Transverse colon (tissue), 4 donors: ENCODE measurements at regions of chr2 and their contacts with region 1.

Region 1: GRCh38 chr2:43239981-43240761 is 13.8 kb upstream of the ZFP36L2 start:
- DNase-seq: no peak
- H3K4me3 ChIP-seq: no peak overlapping the region
- H3K27ac ChIP-seq: peak overlapping the region; percentile 19 to 65 (median 44)
- H3K4me1 ChIP-seq: peaks cover 0 to 3% (median 0%) of the 10 kb centered on the region in 4 donors
- H3K27me3 ChIP-seq: no peaks in the 10 kb centered on the region
- CTCF ChIP-seq: no peak
- EP300 ChIP-seq: no peak
- POLR2A ChIP-seq: no peak

Region 2: DNA sequence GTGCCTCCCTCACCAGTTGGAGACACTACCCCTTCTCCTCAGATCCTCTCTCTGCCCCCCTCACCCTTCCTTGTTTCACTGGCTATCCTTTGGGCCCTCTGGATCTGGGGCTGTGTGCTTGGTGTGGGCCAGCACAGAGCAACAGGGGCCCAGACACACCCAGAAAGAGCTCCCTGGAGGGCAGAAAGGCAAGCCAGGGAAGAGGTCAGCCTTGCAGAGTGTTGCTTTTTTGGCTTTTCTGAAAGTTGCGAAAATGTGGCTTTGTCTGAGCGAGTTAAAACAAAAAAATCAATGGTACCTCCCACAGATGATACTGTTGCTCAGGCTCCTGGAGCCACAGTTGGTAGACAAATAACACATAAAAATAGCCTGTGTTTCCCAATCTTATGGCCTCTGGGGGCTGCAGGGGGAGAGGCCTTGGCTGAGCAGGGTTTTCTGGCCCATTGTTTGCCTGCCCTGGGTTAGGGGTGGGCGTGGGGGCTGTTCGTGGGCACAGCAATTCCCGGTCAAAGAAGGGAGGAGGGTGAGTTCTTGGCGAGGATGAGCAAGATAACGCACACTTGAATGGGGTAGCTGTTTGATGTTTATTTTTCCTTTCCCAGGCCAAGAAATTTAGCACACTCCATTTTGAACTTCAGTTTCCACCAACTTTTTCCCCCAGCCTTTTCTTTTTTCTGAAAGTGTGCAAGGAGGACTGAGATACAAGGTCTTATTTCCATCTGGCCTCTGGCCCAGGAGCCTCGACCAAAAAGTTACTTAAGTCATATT is 280.8 kb before region 1 on chr2:
- in situ Hi-C with region 1: loop called in 2 of 4 experiments (anchors 10 kb)
- intact Hi-C with region 1: no loop called
- DNase-seq: no peak
- H3K4me3 ChIP-seq: no peak overlapping the region
- H3K27ac ChIP-seq: peak overlapping the region; percentile 66 to 76 (median 70)
- H3K4me1 ChIP-seq: peaks cover 13 to 46% (median 27%) of the 10 kb centered on the region in 4 donors
- H3K27me3 ChIP-seq: no peaks in the 10 kb centered on the region
- CTCF ChIP-seq: no peak
- EP300 ChIP-seq: no peak
- POLR2A ChIP-seq: no peak

Region 3: GRCh38 chr2:42964439-42965083 is 275.6 kb before region 1 on chr2:
- in situ Hi-C with region 1: loop called in 2 of 4 experiments (anchors 10 kb)
- intact Hi-C with region 1: no loop called
- DNase-seq: no peak
- H3K4me3 ChIP-seq: no peak overlapping the region
- H3K27ac ChIP-seq: peak overlapping the region; percentile 22 to 43 (median 31)
- H3K4me1 ChIP-seq: peaks cover 10 to 37% (median 20%) of the 10 kb centered on the region in 4 donors
- H3K27me3 ChIP-seq: no peaks in the 10 kb centered on the region
- CTCF ChIP-seq: no peak
- EP300 ChIP-seq: no peak
- POLR2A ChIP-seq: no peak

Region 4: DNA sequence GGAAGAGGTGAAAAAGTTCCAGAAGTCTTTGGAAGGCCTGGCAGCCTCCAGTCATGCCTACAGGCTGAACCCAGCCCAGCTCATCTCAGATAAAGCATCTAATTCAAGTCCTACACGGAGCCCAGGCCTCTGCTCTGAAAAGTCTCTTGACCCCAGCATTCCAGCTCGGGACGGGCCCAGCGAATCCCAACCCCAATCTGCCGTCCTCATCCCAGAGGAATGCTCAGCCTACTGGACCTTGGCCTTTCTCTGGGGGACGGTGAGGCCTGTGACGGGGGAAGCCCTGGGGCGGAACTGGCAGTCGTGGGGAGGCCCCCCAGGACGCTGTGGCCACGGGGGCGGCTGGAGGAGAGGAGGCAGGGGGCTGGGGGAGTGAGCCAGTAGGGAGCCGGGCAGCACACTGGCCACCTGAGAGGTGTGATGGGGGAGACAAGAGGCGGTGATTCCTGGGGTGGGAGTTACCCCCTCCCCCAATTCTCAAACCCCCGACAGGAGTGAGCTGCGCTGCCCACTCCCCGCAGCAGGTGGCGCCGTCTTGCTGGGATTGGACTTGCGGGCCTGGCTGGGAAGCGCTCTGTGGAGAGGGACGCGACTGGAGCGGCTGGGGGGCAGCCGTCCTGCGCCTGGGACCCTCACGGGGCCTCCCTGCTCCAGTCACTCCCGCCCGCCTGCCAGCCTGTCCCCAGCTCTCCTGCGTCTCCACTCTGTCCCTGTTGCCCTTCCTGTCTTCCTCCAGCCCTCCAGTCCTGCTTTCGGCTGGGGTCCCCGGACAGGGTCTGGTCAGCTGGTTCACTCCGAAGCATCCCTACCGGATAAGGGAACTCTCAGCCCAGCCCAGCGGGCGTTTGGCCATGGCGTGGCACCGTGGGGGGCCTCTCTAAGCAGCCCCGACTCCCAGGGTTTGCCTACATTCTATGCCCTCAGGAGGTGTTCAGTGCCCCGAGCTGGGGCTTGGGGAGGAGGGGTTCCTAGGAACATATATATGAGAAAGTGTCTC is 265.2 kb before region 1 on chr2:
- in situ Hi-C with region 1: loop called in 1 of 4 experiments (anchors 10 kb)
- intact Hi-C with region 1: no loop called
- DNase-seq: peak; percentile 79
- H3K4me3 ChIP-seq: peak overlapping the region in 3 of 4 donors; percentile 16 to 46 (median 31)
- H3K27ac ChIP-seq: peak overlapping the region; percentile 58 to 81 (median 70)
- H3K4me1 ChIP-seq: peaks cover 14 to 42% (median 32%) of the 10 kb centered on the region in 4 donors
- H3K27me3 ChIP-seq: no peaks in the 10 kb centered on the region
- CTCF ChIP-seq: peak; percentile 93 to 97 (median 95)
- EP300 ChIP-seq: no peak
- POLR2A ChIP-seq: no peak

Region 5: GRCh38 chr2:43127208-43127940 is 112.8 kb before region 1 on chr2:
- in situ Hi-C with region 1: loop called in 1 of 4 experiments (anchors 10 kb)
- intact Hi-C with region 1: no loop called
- DNase-seq: peak; percentile 84
- H3K4me3 ChIP-seq: no peak overlapping the region
- H3K27ac ChIP-seq: peak overlapping the region; percentile 83 to 89 (median 86)
- H3K4me1 ChIP-seq: peaks cover 20 to 60% (median 34%) of the 10 kb centered on the region in 4 donors
- H3K27me3 ChIP-seq: no peaks in the 10 kb centered on the region
- CTCF ChIP-seq: peak; percentile 52 to 78 (median 59)
- EP300 ChIP-seq: no peak
- POLR2A ChIP-seq: no peak

Region 6: DNA sequence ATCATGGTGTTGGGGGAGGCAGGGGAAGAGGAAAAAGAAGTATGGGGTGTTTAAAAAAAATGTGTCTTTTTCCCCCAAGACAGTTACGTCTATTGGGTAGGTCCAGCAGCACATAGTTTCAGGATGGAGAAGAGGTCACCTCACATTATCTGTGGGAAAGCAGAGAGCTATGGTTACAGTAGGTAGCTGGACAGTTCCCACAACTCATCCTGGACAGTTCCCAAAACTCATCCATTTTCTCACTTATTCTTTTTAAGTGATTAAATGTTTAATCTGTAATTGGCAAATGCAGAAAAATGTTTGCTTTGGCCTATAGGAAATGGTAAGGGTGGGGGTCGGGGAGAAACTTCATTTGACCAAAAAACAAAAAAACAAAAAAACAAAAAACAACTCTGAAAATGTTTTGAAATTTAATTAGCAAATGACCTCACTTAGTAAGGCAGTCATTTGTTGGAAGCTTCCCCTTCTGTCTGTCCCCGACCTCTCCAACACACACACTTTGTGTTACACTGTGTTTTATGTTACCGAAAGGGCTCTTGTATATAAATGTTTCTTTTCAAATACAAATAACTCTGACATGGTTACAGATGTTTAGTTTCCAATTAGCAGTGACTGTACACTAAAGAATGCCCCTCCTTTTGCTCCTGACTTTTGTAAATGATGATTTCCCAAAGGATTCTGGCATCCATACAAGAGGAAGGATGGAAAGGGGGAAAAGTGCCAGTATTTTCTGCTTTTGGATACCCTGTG is 159.5 kb after region 1 on chr2:
- in situ Hi-C with region 1: loop called in 1 of 4 experiments (anchors 10 kb)
- intact Hi-C with region 1: loop called (anchors 10 kb)
- DNase-seq: no peak
- H3K4me3 ChIP-seq: no peak overlapping the region
- H3K27ac ChIP-seq: peak overlapping the region; percentile 63 to 80 (median 72)
- H3K4me1 ChIP-seq: peaks cover 0 to 36% (median 0%) of the 10 kb centered on the region in 4 donors
- H3K27me3 ChIP-seq: no peaks in the 10 kb centered on the region
- CTCF ChIP-seq: no peak
- EP300 ChIP-seq: peak; percentile 77
- POLR2A ChIP-seq: no peak

Region 7: GRCh38 chr2:43408407-43409160 is 168.4 kb after region 1 on chr2:
- in situ Hi-C with region 1: loop called in 1 of 4 experiments (anchors 10 kb)
- intact Hi-C with region 1: no loop called
- DNase-seq: no peak
- H3K4me3 ChIP-seq: no peak overlapping the region
- H3K27ac ChIP-seq: peak overlapping the region; percentile 13 to 27 (median 19)
- H3K4me1 ChIP-seq: peaks cover 0 to 38% (median 7%) of the 10 kb centered on the region in 4 donors
- H3K27me3 ChIP-seq: no peaks in the 10 kb centered on the region
- CTCF ChIP-seq: no peak
- EP300 ChIP-seq: no peak
- POLR2A ChIP-seq: no peak